Posterior vena cava (tissue), 2 donors: ENCODE measurements at regions of chr1 and their contacts with region 1.

Region 1: DNA sequence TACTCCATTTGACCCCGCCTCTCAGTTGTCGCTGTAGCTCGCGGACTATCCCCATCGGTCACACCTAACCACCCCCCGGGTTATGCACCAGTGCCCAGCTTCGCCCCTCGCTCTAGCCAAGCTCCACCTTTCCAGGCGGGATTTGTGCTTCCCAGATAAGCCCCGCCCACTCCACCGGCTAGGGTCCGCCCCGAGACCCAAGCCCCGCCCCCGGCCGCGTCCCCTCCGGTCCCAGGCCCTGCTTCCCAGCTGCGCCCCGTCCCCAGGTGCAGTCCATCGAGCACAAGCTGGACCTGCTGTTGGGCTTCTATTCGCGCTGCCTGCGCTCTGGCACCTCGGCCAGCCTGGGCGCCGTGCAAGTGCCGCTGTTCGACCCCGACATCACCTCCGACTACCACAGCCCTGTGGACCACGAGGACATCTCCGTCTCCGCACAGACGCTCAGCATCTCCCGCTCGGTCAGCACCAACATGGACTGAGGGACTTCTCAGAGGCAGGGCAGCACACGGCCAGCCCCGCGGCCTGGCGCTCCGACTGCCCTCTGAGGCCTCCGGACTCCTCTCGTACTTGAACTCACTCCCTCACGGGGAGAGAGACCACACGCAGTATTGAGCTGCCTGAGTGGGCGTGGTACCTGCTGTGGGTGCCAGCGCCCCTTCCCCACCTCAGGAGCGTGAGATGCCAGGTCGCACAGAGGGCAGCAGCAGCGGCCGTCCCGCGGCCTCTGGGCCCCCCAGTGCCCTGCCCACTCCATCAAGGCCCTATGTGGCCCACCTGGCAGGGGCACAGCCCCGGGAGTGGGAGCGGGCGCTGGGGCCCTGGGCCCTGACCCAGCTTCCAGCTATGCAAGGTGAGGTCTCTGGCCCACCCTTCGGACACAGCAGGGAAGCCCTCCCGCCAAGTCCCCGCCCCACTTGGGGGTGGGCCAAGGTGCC is 23.9 kb downstream of the CITED4 start:
- DNase-seq: peak; percentile 71

Region 2: GRCh38 chr1:40625066-40625465 is 213.2 kb before region 1 on chr1:
- intact Hi-C with region 1: loop called in 1 of 2 experiments (anchors 10 kb)
- DNase-seq: no peak